Activated B cell treated with CpG ODN at 0.5 μM for 24 hours (primary cell): ENCODE measurements at regions of chr2 and their contacts with region 1.

Region 1: GRCh38 chr2:120174963-120175581 is 48.1 kb downstream of the TMEM185B start:
- DNase-seq: no peak
- ATAC-seq: no peak
- H3K4me3 Mint-ChIP-seq: no peak overlapping the region
- H3K27ac Mint-ChIP-seq: peak overlapping the region; percentile 47
- H3K4me1 Mint-ChIP-seq: peaks cover 50% of the 10 kb centered on the region
- H3K27me3 Mint-ChIP-seq: no peaks in the 10 kb centered on the region
- CTCF ChIP-seq: peak; percentile 98

Region 2: DNA sequence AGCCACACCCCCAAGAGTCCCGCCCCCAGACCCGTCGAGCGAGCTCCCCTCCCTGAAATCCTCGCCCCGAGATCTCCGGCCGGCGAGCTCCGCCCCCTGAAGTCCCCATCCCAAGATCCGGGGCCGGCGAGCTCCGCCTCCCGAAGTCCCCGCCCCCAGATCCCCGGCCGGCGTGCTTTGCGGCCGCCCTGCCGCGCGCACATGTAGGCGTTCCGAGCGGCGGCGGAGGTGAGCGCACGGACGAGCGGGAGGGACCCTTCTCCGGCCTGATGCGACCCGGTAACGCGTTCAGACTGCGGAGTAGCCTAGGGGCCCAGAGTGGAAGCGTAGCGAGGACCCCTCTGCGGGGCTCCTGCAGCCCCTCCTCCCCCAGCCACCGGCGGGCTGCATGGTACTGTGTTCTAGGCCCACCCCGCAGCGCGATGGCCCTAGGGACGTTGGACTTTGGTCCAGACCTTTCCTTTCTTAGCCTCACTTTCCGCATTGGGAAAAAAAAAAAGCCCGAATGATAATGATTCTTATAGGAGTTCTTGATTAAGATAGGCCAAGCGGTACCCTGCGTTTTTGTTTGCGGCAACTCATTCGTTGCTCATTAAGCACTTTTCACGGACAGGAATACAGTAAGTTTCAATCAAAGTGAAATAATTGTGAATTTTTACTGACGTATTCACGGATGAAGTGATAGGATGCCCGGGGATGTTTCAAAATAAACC is 495.9 kb before region 1 on chr2 and contains the start of gene TMEM177:
- CTCF ChIA-PET with region 1: interaction called, 3 read pairs
- POLR2A ChIA-PET with region 1: interaction called, 16 read pairs
- intact Hi-C with region 1: loop called (anchors 1 kb)
- DNase-seq: peak; percentile 90
- ATAC-seq: peak; percentile 96
- H3K4me3 Mint-ChIP-seq: peak within 1 kb of the TSS; percentile 90
- H3K27ac Mint-ChIP-seq: peak within 1 kb of the TSS; percentile 68
- H3K4me1 Mint-ChIP-seq: peaks cover 23% of the 10 kb centered on the region
- H3K27me3 Mint-ChIP-seq: no peaks in the 10 kb centered on the region
- CTCF ChIP-seq: no peak
- total RNA-seq, gene TMEM177: 9.0 and 10.3 TPM in 2 replicates

Region 3: DNA sequence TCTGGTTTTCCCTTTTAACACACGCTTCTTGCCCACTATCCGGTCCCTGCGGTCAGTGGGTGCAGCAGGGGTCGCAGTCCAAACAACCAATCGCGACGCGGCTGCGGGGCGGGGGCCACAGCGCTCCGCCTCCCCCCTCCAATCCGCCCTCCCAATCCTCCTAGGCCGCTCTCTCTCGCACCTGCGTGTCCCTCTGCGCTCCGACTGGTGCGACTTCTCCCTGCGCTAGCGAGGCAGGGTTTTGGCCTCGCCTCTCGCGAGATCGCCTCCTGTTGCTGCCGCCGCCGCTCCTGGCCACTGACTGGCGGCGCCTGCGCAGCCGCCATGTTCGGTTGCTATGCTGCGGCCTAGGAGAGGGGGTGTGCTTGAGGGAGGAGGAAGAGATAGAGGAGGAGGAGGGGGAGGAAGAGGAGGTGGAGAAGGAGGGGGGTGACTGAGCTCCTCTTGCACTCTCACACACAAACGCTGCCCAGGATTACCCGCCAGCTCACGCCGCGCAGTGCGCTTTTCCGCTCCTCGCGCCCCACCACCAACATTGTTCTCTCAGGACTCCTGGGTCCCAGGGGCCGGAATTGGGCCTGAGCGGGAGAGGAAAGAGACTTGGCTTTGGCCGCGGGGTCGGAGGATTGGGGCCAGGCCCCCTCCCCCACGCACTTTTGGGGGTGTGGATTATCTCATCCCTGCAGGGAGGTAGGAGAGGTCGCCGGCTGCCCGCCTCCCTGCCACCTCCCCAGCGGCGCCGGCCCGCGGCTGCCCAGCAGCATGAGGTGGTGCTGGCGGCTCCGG is 415.4 kb before region 1 on chr2 and contains the start of gene PTPN4:
- CTCF ChIA-PET with region 1: interaction called, 138 read pairs
- POLR2A ChIA-PET with region 1: interaction called, 29 read pairs
- intact Hi-C with region 1: loop called (anchors 1 kb)
- DNase-seq: peak; percentile 87
- ATAC-seq: peak; percentile 93
- H3K4me3 Mint-ChIP-seq: peak within 1 kb of the TSS; percentile 95
- H3K27ac Mint-ChIP-seq: peak within 1 kb of the TSS; percentile 89
- H3K4me1 Mint-ChIP-seq: peaks cover 41% of the 10 kb centered on the region
- H3K27me3 Mint-ChIP-seq: no peaks in the 10 kb centered on the region
- CTCF ChIP-seq: no peak
- total RNA-seq, gene PTPN4: 28.8 and 41.2 TPM in 2 replicates

Region 4: GRCh38 chr2:120109186-120110061 is 65.6 kb before region 1 on chr2:
- CTCF ChIA-PET with region 1: interaction called, 42 read pairs
- POLR2A ChIA-PET with region 1: no interaction called
- intact Hi-C with region 1: loop called (anchors 1 kb)
- DNase-seq: no peak
- ATAC-seq: peak; percentile 57
- H3K4me3 Mint-ChIP-seq: peak overlapping the region; percentile 42
- H3K27ac Mint-ChIP-seq: peak overlapping the region; percentile 62
- H3K4me1 Mint-ChIP-seq: peaks cover 17% of the 10 kb centered on the region
- H3K27me3 Mint-ChIP-seq: no peaks in the 10 kb centered on the region
- CTCF ChIP-seq: no peak

Region 5: DNA sequence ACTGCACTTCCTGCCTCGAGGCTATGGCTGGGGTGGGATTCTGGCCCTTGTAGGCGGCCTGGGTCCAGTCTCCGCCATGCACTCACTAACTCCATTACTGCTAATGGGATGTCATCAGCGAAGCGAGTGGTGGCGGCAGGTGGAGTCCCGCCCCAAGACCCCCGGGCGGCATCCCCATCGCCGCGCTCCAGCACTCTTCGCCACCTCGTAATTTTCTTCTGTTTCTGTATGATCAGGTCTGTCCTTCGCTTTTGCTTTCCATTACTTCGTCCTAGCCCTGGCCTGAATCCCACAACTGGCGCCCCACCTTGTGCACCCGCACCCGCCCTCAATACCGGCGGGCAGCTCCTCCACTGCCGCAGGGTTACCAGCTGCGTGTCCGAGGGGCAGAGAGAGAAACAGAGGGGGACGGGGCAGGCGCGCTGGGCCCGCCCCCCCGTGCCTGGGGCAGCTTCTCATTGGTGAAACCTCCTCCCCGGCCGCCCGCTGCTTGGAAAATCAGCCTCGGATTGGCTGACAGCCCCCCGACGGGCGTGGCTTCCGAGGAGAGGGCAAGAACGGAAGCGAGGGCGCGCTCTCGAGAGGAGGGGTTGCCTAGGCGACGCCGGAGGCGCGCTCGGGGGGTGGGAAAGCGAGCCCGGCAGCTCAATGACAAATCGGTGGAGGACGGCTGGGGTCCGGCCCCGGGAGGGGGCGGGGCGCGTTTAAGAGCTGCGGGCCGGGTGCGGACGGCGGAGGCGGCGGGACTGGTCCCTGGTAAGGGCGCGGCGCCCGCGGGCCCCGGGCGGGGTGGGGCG is 77.4 kb after region 1 on chr2 and contains the start of gene RALB:
- CTCF ChIA-PET with region 1: interaction called, 4 read pairs
- POLR2A ChIA-PET with region 1: interaction called, 21 read pairs
- intact Hi-C with region 1: loop called (anchors 1 kb)
- DNase-seq: peak; percentile 98
- ATAC-seq: peak; percentile 94
- H3K4me3 Mint-ChIP-seq: peak within 1 kb of the TSS; percentile 99
- H3K27ac Mint-ChIP-seq: peak within 1 kb of the TSS; percentile 94
- H3K4me1 Mint-ChIP-seq: peaks cover 63% of the 10 kb centered on the region
- H3K27me3 Mint-ChIP-seq: peaks cover 3% of the 10 kb centered on the region
- CTCF ChIP-seq: no peak
- total RNA-seq, gene RALB: 29.9 and 33.4 TPM in 2 replicates